A673 (cell line): ENCODE measurements at regions of chr2 and their contacts with region 1.

Region 1: DNA sequence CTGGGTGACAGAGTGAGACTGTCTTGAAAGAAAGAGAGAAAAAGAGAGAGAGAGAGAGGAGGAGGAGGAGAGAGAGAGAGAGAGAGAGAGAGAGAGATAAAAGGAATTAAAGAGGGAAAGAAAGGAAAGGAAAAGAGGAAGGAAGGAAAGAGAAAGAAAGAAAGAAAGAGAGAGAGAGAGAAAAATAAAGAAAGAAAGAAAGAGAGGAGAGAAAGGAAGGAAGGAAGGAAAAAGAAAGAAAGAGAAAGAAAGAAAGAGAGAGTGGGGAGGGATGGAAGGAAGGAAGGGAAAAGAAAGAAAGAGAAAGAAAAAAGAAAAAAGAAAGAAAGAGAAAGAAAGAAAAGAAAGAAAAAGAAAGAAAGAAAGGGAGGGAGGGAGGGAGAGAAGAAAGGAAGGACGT is 29.8 kb downstream of the MOGAT1 start:
- DNase-seq: no peak
- H3K4me3 ChIP-seq: no peak overlapping the region
- H3K27ac ChIP-seq: no peak overlapping the region
- H3K4me1 ChIP-seq: no peaks in the 10 kb centered on the region
- H3K27me3 ChIP-seq: no peaks in the 10 kb centered on the region
- CTCF ChIP-seq: no peak

Region 2: DNA sequence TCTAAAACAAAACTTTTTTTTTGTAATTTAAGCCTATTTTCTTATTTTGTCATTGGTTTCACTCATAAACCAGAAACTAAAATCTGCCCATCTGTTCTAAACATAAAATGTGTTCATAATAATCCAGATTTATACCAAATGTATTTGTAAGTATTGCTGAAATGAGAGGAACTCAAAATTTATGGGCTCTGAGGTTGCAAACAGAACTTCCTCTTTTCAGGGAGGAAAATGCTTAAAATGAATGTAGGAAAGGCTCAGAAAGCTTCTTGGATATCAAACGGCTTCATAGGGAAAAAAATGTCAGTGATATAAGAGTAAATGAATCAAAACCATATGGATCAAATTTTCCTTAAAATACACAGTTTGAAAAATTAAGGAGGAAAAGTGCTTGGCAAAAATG is 486.3 kb before region 1 on chr2:
- CTCF ChIA-PET with region 1: no interaction called
- POLR2A ChIA-PET with region 1: no interaction called
- intact Hi-C with region 1: no loop called
- DNase-seq: no peak
- H3K4me3 ChIP-seq: no peak overlapping the region
- H3K27ac ChIP-seq: no peak overlapping the region
- H3K4me1 ChIP-seq: peaks cover 29% of the 10 kb centered on the region
- H3K27me3 ChIP-seq: no peaks in the 10 kb centered on the region
- CTCF ChIP-seq: no peak

Region 3: DNA sequence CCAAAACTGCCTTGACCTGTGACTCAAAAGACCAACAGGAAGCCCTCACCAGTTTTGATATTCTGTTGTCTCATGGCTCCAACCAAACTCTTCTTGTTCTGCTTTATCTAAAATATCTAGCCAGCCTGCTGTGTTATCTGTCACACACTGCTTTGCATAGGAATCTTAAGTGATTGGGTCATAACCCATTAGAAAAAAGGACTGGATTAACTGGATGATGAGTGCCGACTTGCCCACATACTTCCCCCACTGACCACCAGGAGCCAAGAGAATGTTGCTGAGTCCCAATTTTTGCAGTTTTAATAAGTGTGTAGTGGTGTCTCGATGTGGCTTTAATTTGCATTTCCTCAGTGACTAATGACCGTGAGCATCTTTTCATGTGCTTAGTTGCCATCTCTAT is 23.3 kb before region 1 on chr2:
- CTCF ChIA-PET with region 1: no interaction called
- POLR2A ChIA-PET with region 1: interaction called, 14 read pairs
- intact Hi-C with region 1: no loop called
- DNase-seq: peak; percentile 49
- H3K4me3 ChIP-seq: no peak overlapping the region
- H3K27ac ChIP-seq: no peak overlapping the region
- H3K4me1 ChIP-seq: peaks cover 7% of the 10 kb centered on the region
- H3K27me3 ChIP-seq: no peaks in the 10 kb centered on the region
- CTCF ChIP-seq: no peak

Region 4: GRCh38 chr2:223328578-223328977 is 627.3 kb after region 1 on chr2:
- CTCF ChIA-PET with region 1: no interaction called
- POLR2A ChIA-PET with region 1: no interaction called
- intact Hi-C with region 1: no loop called
- DNase-seq: no peak
- H3K4me3 ChIP-seq: no peak overlapping the region
- H3K27ac ChIP-seq: no peak overlapping the region
- H3K4me1 ChIP-seq: peaks cover 5% of the 10 kb centered on the region
- H3K27me3 ChIP-seq: no peaks in the 10 kb centered on the region
- CTCF ChIP-seq: no peak